Caco-2 (cell line): ENCODE measurements at regions of chr17 and their contacts with region 1.

Region 1: GRCh38 chr17:57518587-57519581 is 226.2 kb downstream of the CCDC182 start:
- DNase-seq: peak; percentile 69 to 82
- H3K4me3 ChIP-seq: no peak overlapping the region
- H3K4me3 Mint-ChIP-seq: peak overlapping the region; percentile 31
- H3K27ac Mint-ChIP-seq: peak overlapping the region; percentile 94
- H3K4me1 ChIP-seq: peaks cover 60% of the 10 kb centered on the region
- H3K4me1 Mint-ChIP-seq: peaks cover 55% of the 10 kb centered on the region
- H3K27me3 ChIP-seq: no peaks in the 10 kb centered on the region
- H3K27me3 Mint-ChIP-seq: no peaks in the 10 kb centered on the region
- CTCF ChIP-seq: no peak

Region 2: DNA sequence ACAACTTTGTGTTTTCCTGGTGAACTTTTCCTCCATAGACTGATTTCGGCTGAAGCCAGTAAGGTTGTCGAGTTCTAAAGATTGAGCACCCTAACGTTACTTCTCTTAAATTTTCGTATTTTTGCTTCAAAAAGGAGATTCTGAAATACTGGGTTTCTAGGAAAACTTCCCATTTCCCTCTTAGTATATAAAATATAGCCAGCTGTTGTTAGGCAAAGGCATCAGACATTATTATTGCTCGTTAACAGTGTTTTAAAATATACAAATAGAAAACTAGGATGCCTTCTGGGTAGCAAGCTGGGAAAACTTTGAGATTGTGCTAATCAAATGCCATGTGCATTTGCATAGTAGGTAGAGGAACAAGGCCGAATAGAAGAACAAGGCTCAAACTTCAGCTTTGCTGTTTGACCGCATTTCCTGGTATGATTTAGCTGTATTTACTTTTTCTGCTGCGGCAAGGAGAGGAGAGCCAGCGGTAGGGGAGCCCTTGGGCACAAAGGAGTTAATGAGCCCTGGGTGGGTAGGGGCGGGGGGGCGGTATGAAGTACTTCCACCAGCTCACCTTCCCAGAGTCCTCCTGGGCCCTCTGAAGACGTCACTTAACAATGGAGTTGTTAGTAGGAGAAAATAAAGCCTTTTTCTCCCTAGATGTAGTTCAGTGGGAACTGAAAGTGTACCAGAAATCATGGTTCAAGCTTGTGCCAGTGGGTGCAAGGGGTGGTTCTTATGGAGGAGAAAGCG is 110.6 kb before region 1 on chr17:
- CTCF ChIA-PET with region 1: no interaction called
- POLR2A ChIA-PET with region 1: no interaction called
- intact Hi-C with region 1: no loop called
- DNase-seq: no peak
- H3K4me3 ChIP-seq: no peak overlapping the region
- H3K4me3 Mint-ChIP-seq: no peak overlapping the region
- H3K27ac Mint-ChIP-seq: peak overlapping the region; percentile 93
- H3K4me1 ChIP-seq: peaks cover 30% of the 10 kb centered on the region
- H3K4me1 Mint-ChIP-seq: peaks cover 32% of the 10 kb centered on the region
- H3K27me3 ChIP-seq: no peaks in the 10 kb centered on the region; the same call in 1 of the 2 replicates
- H3K27me3 Mint-ChIP-seq: no peaks in the 10 kb centered on the region
- CTCF ChIP-seq: no peak

Region 3: GRCh38 chr17:57440522-57441485 is 78.1 kb before region 1 on chr17:
- CTCF ChIA-PET with region 1: interaction called, 3 read pairs
- POLR2A ChIA-PET with region 1: no interaction called
- intact Hi-C with region 1: loop called (anchors 5 kb)
- DNase-seq: no peak
- H3K4me3 ChIP-seq: no peak overlapping the region
- H3K4me3 Mint-ChIP-seq: no peak overlapping the region
- H3K27ac Mint-ChIP-seq: peak overlapping the region; percentile 78
- H3K4me1 ChIP-seq: peaks cover 61% of the 10 kb centered on the region
- H3K4me1 Mint-ChIP-seq: peaks cover 65% of the 10 kb centered on the region
- H3K27me3 ChIP-seq: no peaks in the 10 kb centered on the region
- H3K27me3 Mint-ChIP-seq: no peaks in the 10 kb centered on the region
- CTCF ChIP-seq: no peak

Region 4: GRCh38 chr17:57463103-57463851 is 55.6 kb before region 1 on chr17:
- CTCF ChIA-PET with region 1: no interaction called
- POLR2A ChIA-PET with region 1: no interaction called
- intact Hi-C with region 1: no loop called
- DNase-seq: no peak
- H3K4me3 ChIP-seq: no peak overlapping the region
- H3K4me3 Mint-ChIP-seq: no peak overlapping the region
- H3K27ac Mint-ChIP-seq: no peak overlapping the region
- H3K4me1 ChIP-seq: peaks cover 8% of the 10 kb centered on the region
- H3K4me1 Mint-ChIP-seq: peaks cover 13% of the 10 kb centered on the region
- H3K27me3 ChIP-seq: no peaks in the 10 kb centered on the region
- H3K27me3 Mint-ChIP-seq: no peaks in the 10 kb centered on the region
- CTCF ChIP-seq: no peak

Region 5: GRCh38 chr17:57480438-57481196 is 38.3 kb before region 1 on chr17:
- CTCF ChIA-PET with region 1: no interaction called
- POLR2A ChIA-PET with region 1: no interaction called
- intact Hi-C with region 1: loop called (anchors 5 kb)
- DNase-seq: no peak
- H3K4me3 ChIP-seq: no peak overlapping the region
- H3K4me3 Mint-ChIP-seq: no peak overlapping the region
- H3K27ac Mint-ChIP-seq: no peak overlapping the region
- H3K4me1 ChIP-seq: peaks cover 11% of the 10 kb centered on the region; the same call in 1 of the 2 replicates
- H3K4me1 Mint-ChIP-seq: peaks cover 13% of the 10 kb centered on the region
- H3K27me3 ChIP-seq: no peaks in the 10 kb centered on the region
- H3K27me3 Mint-ChIP-seq: no peaks in the 10 kb centered on the region
- CTCF ChIP-seq: no peak

Region 6: GRCh38 chr17:57561072-57561861 is 42.4 kb after region 1 on chr17:
- CTCF ChIA-PET with region 1: no interaction called
- POLR2A ChIA-PET with region 1: interaction called, 3 read pairs
- intact Hi-C with region 1: loop called (anchors 1 kb)
- DNase-seq: peak; percentile 85 to 90
- H3K4me3 ChIP-seq: no peak overlapping the region
- H3K4me3 Mint-ChIP-seq: peak overlapping the region; percentile 51
- H3K27ac Mint-ChIP-seq: peak overlapping the region; percentile 53
- H3K4me1 ChIP-seq: peaks cover 43% of the 10 kb centered on the region
- H3K4me1 Mint-ChIP-seq: peaks cover 44% of the 10 kb centered on the region
- H3K27me3 ChIP-seq: no peaks in the 10 kb centered on the region
- H3K27me3 Mint-ChIP-seq: no peaks in the 10 kb centered on the region
- CTCF ChIP-seq: peak in 1 of 2 experiments; percentile 1